Calu3 (cell line): ENCODE measurements at regions of chr6 and their contacts with region 1.

Region 1: DNA sequence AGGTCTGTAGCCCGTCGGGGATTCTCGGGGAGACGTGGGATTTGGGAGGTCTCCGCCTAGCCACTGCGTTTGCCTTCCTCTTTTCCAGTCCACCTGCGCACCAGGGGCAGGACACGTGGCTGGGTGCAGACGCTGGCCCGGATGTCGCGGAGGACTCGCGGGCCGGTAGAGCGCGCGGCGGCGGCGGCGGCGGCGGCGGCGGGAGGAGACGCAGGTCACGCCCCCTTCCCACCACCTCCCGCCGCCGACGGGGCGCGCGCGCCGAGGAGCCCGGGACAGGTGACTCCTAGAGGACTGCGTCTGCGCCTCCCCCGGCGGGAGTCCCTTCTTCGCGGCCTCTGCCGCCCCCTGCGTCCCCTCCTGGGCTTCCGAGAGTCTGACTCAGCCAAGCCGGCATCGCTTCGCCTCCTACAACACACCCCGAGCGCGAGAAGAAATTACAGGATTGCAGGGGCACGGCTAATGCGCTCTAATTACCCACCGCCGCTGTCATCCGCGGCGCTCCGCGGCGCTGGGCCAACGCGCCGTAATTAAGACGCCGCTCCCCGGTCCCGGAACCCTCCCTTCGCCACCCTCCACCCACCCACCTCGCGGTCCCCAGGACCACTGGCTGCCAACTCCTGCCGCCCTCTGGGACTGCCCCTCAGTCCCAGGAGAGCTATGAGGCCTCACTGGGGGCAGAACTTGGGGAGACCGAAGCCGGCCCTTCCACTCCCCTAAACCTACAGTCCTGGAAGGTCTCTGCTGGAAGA is 124.5 kb downstream of the MRPL14 start:
- DNase-seq: peak; percentile 97
- H3K4me3 Mint-ChIP-seq: peak overlapping the region; percentile 78
- H3K27ac Mint-ChIP-seq: peak overlapping the region; percentile 96
- H3K4me1 Mint-ChIP-seq: peaks cover 70% of the 10 kb centered on the region
- H3K27me3 Mint-ChIP-seq: no peaks in the 10 kb centered on the region
- CTCF ChIP-seq: peak; percentile 10

Region 2: DNA sequence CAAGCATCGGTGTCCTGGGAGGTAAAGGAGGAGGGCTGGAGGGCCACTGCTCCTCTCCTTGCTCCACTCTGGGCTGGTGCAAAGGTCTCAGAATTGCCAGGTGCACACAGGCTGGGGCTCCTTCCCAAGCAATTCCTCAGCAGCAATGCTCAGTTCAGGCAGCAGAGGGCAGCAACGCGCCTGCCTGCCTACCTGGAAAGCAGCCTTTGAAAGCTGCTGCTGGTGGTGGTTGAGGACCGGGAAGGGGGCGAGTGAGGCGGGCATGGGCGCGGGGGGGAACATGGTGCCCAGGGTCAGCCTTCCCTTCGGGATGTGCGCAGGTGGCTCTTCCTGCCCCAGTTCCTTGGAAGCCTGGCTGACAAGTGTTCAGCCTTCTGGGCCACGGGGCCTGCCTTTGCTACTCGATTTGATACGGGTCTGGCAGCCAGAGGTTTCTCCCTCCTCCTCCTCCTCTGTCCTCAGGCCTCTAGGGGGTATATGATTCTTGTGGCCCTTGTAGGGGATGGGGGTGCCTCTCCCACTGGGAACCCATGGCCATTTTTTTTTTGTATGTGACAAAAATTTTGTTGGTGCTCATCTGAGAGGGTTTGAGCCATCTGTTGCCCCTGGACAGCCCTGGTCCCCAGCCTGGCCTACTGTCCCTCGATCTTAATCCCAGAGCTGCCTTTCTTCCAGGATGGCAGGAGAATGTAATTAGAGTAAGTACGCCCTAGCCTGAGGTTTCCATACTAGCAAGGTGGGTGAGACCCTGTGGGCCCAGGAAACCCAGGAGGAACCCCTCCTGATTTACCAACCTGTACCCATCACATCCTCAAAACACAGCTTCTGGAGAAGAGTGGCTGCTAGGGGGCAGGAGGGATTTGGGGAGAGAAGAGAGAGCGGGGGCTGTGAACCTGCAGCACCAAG is 335.3 kb before region 1 on chr6:
- CTCF ChIA-PET with region 1: interaction called, 5 read pairs
- intact Hi-C with region 1: loop called (anchors 5 kb)
- DNase-seq: peak; percentile 94
- H3K4me3 Mint-ChIP-seq: peak overlapping the region; percentile 43
- H3K27ac Mint-ChIP-seq: peak overlapping the region; percentile 80
- H3K4me1 Mint-ChIP-seq: peaks cover 40% of the 10 kb centered on the region
- H3K27me3 Mint-ChIP-seq: no peaks in the 10 kb centered on the region
- CTCF ChIP-seq: peak; percentile 98

Region 3: GRCh38 chr6:43769526-43770416 is 233.0 kb before region 1 on chr6 and contains the start of gene VEGFA:
- CTCF ChIA-PET with region 1: interaction called, 9 read pairs
- intact Hi-C with region 1: loop called (anchors 1 kb)
- DNase-seq: peak; percentile 97
- H3K4me3 Mint-ChIP-seq: peak within 1 kb of the TSS; percentile 87
- H3K27ac Mint-ChIP-seq: peak within 1 kb of the TSS; percentile 95
- H3K4me1 Mint-ChIP-seq: peaks cover 52% of the 10 kb centered on the region
- H3K27me3 Mint-ChIP-seq: no peaks in the 10 kb centered on the region
- CTCF ChIP-seq: peak; percentile 99
- total RNA-seq, gene VEGFA: 345 and 407 TPM in 2 replicates

Region 4: DNA sequence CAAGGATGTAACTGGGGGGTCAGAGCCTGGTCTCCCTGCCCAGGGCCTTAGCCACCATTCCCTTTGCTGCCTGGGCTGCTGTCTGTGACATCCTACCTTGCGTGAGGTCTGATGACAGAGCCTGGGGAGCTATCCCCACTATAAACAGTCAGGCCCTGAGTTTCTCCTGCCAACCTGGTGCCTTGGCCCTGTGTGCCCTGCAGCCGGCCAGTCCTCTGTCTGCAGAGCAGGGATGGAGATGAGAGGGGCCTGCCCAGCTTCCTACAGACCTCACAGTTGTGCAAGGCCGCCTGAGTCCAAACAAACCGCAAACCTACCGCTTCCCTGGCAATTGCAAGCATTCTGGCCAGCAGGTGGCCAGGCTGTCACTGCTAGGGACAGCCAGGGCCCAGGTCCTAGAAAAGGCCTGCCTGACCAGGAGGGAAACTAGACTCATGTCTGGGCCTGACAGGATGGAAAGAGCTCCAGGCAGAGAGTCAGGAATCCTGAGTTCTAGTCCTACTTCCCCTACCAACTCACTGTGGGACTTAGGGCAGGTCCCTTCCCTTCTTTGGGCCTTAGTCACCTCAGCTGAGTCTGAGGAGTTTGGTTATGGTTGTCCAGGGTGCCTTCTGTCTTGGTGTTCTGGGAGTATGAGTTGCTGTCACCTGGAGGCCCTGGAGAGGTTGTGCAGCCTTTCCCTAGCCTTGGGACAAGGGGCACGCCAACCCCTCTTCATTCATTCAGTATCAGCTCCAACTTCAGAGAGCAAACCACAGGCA is 146.6 kb before region 1 on chr6:
- CTCF ChIA-PET with region 1: interaction called, 14 read pairs
- intact Hi-C with region 1: loop called (anchors 10 kb)
- DNase-seq: peak; percentile 86
- H3K4me3 Mint-ChIP-seq: no peak overlapping the region
- H3K27ac Mint-ChIP-seq: peak overlapping the region; percentile 72
- H3K4me1 Mint-ChIP-seq: peaks cover 63% of the 10 kb centered on the region
- H3K27me3 Mint-ChIP-seq: no peaks in the 10 kb centered on the region
- CTCF ChIP-seq: peak; percentile 94

Region 5: DNA sequence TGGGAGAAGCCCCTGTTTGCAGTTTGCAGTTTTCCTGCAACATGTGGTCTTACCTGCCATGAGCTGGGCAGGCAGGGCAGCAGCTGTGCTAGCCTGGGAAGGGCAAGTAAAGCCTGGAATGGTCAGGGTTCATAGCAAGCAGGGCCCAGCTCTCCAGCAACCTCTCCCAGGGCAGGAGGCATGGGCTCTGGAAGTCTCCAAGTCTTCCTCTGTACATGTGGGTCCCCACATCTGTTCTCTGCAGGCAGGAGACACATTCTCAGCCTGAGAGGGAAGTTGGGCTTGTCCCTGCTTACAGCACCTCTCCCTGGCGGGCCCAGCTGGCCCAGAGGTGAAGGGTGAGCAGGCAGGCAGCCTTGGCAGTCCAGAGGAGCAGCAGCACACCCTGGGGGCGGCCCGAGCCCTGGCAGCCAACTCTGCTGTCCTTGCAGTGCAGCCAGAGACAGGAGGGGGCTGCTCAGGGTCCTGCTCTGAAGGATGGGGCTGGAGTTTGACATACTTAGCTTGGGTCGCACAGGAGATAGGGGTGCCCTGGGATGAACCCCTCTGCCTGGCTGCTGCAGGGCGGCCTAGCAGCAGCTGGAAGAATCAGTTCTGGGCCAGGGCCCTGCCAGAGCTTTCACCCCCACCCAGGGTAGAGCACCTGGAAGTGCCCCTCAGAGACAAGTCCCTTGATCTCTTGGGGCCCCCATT is 51.6 kb before region 1 on chr6:
- CTCF ChIA-PET with region 1: interaction called, 5 read pairs
- intact Hi-C with region 1: loop called (anchors 1 kb)
- DNase-seq: peak; percentile 91
- H3K4me3 Mint-ChIP-seq: no peak overlapping the region
- H3K27ac Mint-ChIP-seq: no peak overlapping the region
- H3K4me1 Mint-ChIP-seq: peaks cover 32% of the 10 kb centered on the region
- H3K27me3 Mint-ChIP-seq: no peaks in the 10 kb centered on the region
- CTCF ChIP-seq: peak; percentile 74

Region 6: DNA sequence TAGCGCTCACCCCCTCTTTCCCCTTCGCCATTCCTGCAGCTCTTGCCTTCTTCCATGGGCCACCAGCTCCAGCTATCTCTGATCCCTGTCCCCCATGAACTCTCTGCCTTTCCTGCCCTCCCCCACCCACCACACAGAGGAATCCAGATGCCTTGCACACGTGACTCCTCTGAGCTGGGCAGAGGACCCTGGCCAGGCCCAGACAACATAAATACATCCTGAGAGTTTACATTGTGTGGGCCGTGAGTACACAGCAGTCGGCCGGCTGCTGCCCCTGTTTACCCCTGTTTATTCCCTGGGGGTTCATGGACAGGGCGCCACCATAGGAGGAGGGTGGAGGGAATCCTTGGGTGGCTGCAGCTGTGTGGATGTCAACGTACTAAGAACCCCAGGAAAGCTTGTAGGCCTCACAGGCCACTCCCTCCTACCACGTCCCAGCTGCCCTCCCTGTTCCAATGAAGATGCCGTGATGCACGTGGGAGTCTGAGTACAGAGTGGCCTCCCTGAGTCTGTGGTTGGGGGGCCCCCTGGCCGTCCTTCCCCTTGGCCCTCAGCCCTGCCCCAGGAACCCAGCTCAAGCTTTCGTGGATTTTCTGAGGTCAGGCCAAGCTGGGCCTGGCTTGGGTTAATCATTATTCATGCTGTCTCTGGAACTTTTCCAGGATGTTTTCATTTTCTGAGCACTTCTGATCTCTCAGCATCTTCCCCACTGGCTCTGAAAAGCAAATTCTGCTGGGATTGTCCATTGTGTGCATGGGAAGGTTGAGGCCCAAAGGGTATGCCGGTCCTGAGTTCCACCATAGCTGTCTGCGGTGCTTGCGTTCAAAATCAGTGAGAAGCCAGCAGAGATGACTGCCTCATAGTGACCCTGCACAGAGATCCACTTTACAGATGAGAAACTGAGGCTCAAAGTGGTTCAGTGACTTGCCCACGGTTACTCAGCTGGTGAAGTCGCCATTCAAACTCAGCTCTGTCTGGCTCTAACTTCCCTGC is 11.8 kb before region 1 on chr6:
- CTCF ChIA-PET with region 1: interaction called, 13 read pairs
- intact Hi-C with region 1: no loop called
- DNase-seq: peak; percentile 56
- H3K4me3 Mint-ChIP-seq: no peak overlapping the region
- H3K27ac Mint-ChIP-seq: no peak overlapping the region
- H3K4me1 Mint-ChIP-seq: peaks cover 53% of the 10 kb centered on the region
- H3K27me3 Mint-ChIP-seq: no peaks in the 10 kb centered on the region
- CTCF ChIP-seq: no peak

Region 7: DNA sequence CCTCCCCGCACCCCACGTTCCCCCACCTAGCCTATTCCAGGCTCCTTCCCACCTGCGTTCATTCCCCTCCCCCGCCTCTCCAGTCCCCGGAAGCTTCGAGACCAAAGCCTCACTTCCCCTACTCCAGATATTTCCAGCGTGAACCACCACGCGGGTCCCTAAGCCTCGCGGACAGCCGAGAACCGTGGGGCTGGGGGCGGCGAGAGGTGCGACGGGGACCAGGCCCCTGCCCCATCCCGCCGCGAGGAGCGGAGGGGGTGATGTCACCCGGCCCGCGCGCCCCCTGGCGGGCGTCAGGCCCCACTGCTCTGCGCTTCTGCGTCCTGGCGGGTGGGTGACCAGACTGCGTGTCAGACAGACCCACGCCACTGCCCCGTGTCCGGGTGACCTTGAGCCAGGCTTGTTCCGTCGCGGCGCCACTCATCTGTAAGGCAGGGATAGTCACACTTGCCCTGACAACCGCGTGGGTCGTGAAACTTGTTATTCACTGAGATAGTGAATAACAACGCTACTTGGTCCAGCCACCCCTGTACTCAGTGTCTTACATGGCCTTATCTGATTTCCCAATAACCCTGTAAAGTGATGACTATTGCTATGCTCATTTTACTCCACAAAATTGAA is 235.2 kb after region 1 on chr6:
- CTCF ChIA-PET with region 1: no interaction called
- intact Hi-C with region 1: no loop called
- DNase-seq: peak; percentile 95
- H3K4me3 Mint-ChIP-seq: peak overlapping the region; percentile 83
- H3K27ac Mint-ChIP-seq: peak overlapping the region; percentile 91
- H3K4me1 Mint-ChIP-seq: peaks cover 41% of the 10 kb centered on the region
- H3K27me3 Mint-ChIP-seq: no peaks in the 10 kb centered on the region
- CTCF ChIP-seq: peak; percentile 99